Panc1 (cell line): ENCODE measurements at regions of chr18 and their contacts with region 1.

Region 1: GRCh38 chr18:24659827-24660720 is 199.6 kb downstream of the HRH4 start:
- DNase-seq: no peak
- ATAC-seq: no peak; the same call in 1 of the 2 replicates
- H3K4me3 ChIP-seq: peak overlapping the region; percentile 2 to 34; a peak in 3 of 4 replicates
- H3K27ac ChIP-seq: no peak overlapping the region
- H3K4me1 ChIP-seq: 0 out of 2 replicates have a peak, but pooled peaks cover 3% of the 10 kb centered on the region
- H3K27me3 ChIP-seq: no peaks in the 10 kb centered on the region; the same call in 1 of the 2 replicates
- CTCF ChIP-seq: no peak

Region 2: DNA sequence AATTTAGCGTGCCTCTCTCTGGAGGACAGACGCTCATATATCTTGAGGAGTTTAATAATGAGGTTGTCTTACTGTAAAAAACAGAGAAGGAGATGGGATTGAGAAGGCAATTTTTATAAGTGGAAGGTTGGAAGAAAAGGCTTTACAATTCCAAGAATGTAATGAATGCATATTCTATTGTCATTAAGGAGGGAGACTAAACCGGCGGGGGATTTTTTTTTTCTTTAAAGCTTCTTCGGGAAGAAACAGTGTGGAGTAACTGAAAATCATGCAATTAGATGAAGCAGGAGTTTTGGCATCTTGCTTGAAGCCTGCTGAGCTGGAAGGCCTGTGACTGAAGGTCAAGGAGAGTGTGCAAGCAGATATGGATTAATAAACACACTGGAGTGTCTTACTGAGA is 75.3 kb before region 1 on chr18:
- CTCF ChIA-PET with region 1: no interaction called
- POLR2A ChIA-PET with region 1: interaction called, 4 read pairs
- in situ Hi-C with region 1: loop called (anchors 10 kb)
- intact Hi-C with region 1: no loop called
- DNase-seq: no peak
- ATAC-seq: no peak
- H3K4me3 ChIP-seq: no peak overlapping the region
- H3K27ac ChIP-seq: no peak overlapping the region
- H3K4me1 ChIP-seq: no peaks in the 10 kb centered on the region
- H3K27me3 ChIP-seq: peaks cover 15% of the 10 kb centered on the region
- CTCF ChIP-seq: no peak

Region 3: DNA sequence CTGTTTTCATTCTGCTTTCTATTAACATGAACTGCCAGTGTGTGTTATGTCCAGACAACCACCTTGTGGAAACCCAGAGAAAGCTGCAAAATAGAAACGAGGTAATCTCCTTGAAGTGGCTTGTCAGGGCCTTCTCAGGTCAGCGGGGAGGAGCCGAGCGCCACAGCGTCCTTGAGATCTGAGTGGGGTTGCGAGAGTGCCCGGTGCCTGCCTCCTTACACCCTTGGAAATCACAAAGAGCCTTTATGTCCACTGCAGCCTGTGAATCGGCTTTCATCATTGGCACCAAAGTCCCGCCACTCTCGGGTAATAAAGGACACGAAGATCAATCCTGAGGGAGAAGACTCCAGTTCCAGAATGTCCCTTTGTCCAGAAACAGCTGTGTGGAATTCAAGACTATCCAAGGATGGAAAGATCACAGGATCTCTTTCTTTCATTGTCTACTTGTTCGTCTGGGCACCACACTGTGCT is 64.5 kb before region 1 on chr18:
- CTCF ChIA-PET with region 1: no interaction called
- POLR2A ChIA-PET with region 1: no interaction called
- in situ Hi-C with region 1: no loop called
- intact Hi-C with region 1: no loop called
- DNase-seq: no peak
- ATAC-seq: no peak
- H3K4me3 ChIP-seq: no peak overlapping the region
- H3K27ac ChIP-seq: no peak overlapping the region
- H3K4me1 ChIP-seq: no peaks in the 10 kb centered on the region
- H3K27me3 ChIP-seq: peaks cover 6% of the 10 kb centered on the region; the same call in 1 of the 2 replicates
- CTCF ChIP-seq: no peak